ENCODE measurements at regions of chr4 and their contacts with region 1.

Region 1: GRCh38 chr4:117134386-117134785 is 49.0 kb upstream of the TRAM1L1 start:
- DNase-seq: peak; percentile 0
- ATAC-seq: peak; percentile 69
- H3K4me3 ChIP-seq: no peak overlapping the region
- H3K27ac ChIP-seq: no peak overlapping the region
- H3K4me1 ChIP-seq: no peaks in the 10 kb centered on the region
- H3K27me3 ChIP-seq: no peaks in the 10 kb centered on the region
- CTCF ChIP-seq: peak; percentile 35 to 50 (median 46); a peak in 4 of 6 replicates
- EP300 ChIP-seq: no peak
- POLR2A ChIP-seq: no peak
- RAD21 ChIP-seq: peak; percentile 91

Region 2: DNA sequence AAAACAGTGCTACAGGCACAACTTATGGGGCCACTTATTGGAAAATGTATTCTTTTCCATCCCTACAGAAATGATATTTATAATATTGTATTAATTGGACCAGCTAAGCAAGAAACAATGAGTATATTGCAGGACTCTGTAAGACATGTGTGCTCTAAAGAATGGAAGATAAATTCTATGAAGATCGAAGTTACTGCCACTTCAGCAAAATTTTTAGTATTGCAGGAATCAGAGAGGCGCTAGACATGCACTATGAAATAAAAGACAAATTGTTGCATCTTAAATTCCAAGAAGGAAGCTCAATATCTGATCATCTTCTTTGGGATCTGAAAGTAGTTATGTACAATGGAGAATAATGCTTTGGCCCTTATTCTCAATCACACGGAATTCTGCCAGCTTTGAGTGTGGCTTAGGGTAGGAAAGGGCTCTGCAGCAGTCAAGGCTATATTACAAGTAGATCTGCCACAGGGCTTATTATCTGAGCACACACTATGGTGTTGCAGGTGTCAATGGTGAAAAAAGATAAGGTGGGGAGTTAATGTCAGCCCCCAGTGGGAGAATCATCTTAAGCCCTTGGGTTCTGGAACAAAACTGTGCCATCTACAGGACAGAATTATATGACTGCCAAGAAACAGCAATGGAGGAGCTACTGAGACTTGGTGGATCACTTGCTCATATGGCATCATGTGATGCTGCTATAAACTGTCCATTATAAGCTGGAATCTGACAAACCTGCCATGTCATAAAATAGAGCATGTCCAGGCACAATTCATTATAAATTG is 565.9 kb after region 1 on chr4:
- CTCF ChIA-PET with region 1: interaction called, 11 read pairs
- POLR2A ChIA-PET with region 1: no interaction called
- RAD21 ChIA-PET with region 1: no interaction called
- SMC1A ChIA-PET with region 1: no interaction called
- in situ Hi-C with region 1: no loop called
- intact Hi-C with region 1: loop called (anchors 2 kb)
- DNase-seq: no peak
- ATAC-seq: peak; percentile 87
- H3K4me3 ChIP-seq: no peak overlapping the region
- H3K27ac ChIP-seq: no peak overlapping the region
- H3K4me1 ChIP-seq: no peaks in the 10 kb centered on the region
- H3K27me3 ChIP-seq: no peaks in the 10 kb centered on the region
- CTCF ChIP-seq: peak; percentile 33 to 41 (median 35); a peak in 5 of 6 replicates
- EP300 ChIP-seq: no peak
- POLR2A ChIP-seq: no peak
- RAD21 ChIP-seq: peak; percentile 37

Region 3: DNA sequence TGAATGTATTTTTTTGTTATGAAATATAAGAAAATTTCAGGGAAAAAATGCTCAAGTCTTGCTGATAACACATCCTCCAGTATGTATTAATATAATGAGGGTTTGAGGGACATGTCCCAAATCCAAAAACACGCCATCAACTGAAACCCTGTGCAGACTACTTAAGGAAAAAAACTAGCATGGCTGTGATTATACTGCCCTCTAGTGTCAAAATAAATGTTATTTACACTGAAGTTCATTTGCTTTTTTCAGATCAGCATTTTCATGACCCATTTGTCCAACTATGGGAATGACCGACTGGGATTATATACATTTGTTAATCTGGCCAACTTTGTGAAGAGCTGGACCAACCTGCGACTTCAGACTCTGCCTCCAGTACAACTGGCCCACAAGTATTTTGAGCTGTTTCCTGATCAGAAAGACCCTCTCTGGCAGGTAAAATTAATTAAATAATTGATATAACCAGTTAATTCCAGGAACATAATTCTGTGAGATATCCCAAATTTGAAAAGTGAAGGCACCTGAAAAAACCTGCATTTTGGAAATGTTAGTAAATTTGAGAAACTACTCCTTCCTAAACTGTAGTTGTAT is 1089.9 kb after region 1 on chr4:
- CTCF ChIA-PET with region 1: interaction called, 9 read pairs
- POLR2A ChIA-PET with region 1: no interaction called
- RAD21 ChIA-PET with region 1: no interaction called
- SMC1A ChIA-PET with region 1: no interaction called
- in situ Hi-C with region 1: no loop called
- intact Hi-C with region 1: loop called (anchors 5 kb)
- DNase-seq: no peak
- ATAC-seq: peak; percentile 71
- H3K4me3 ChIP-seq: no peak overlapping the region
- H3K27ac ChIP-seq: no peak overlapping the region
- H3K4me1 ChIP-seq: no peaks in the 10 kb centered on the region
- H3K27me3 ChIP-seq: no peaks in the 10 kb centered on the region; a peak in 1 of 4 replicates
- CTCF ChIP-seq: peak; percentile 35 to 69 (median 50); a peak in 4 of 6 replicates
- EP300 ChIP-seq: no peak
- POLR2A ChIP-seq: no peak
- RAD21 ChIP-seq: peak; percentile 69

Region 4: DNA sequence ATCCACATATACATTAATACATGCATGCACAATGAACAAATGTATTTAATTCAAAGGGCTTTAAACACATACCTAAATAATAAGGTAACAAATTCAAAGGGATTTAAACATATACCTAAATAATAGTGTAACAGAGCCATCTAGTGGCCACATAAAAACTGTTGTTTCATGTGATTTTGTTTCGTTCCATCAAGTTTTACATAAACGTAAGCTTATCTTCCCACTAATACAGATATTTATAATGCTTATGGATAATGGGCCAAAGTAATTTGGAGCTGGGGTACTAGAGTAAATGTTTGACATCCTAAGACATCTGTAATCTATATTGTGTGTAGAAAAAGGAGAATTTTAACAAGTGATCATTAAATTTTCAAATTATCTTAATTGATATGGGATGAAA is 1136.1 kb after region 1 on chr4:
- CTCF ChIA-PET with region 1: no interaction called
- POLR2A ChIA-PET with region 1: no interaction called
- RAD21 ChIA-PET with region 1: no interaction called
- SMC1A ChIA-PET with region 1: no interaction called
- in situ Hi-C with region 1: loop called (anchors 25 kb)
- intact Hi-C with region 1: no loop called
- DNase-seq: no peak
- ATAC-seq: peak; percentile 73
- H3K4me3 ChIP-seq: no peak overlapping the region
- H3K27ac ChIP-seq: no peak overlapping the region
- H3K4me1 ChIP-seq: no peaks in the 10 kb centered on the region
- H3K27me3 ChIP-seq: no peaks in the 10 kb centered on the region
- CTCF ChIP-seq: peak; percentile 30 to 61 (median 59); a peak in 4 of 6 replicates
- EP300 ChIP-seq: no peak
- POLR2A ChIP-seq: no peak
- RAD21 ChIP-seq: peak; percentile 55